Common myeloid progenitor, CD34-positive (primary cell): ENCODE measurements at regions of chr4 and their contacts with region 1.

Region 1: DNA sequence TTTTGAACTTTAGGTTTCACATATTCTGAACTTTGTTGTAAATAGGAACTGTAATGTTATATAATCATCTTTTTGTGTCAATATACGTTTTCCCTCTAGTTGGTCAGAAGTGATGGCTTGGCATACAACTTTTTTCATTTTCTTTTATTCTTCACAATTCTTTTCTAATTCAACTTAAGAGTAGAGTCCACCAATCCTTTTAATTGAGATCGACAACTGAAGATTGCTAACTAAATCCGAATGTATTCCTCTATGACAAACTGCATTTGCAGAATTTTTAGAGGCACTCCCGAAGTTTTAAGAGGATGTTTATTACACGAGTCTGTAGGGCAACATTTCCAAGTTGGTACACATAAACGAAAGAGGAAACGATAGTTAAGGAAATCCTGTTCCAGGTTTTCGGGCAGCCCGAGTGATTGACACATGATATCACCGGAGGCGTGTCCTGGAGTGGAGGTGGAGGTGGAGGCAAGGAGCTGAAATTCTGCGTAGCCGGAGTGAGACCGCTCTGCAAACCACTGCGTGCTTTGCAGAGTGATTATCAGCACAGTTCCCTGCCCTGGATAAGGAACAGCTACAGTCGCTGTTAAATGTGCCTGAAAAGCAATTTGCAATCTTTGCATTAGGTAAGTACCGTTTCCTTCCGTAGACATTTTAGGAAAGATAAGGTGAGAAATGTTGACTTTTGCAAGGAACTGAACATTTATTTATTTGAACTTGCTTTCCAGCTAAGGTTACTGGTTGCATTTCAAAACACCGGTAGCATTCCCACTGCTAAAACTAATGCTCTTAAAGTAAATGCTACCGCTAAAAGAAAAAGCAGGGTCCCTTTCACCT is at the start of gene SPRY1:
- DNase-seq: peak; percentile 88 to 96 (median 95)
- H3K4me3 ChIP-seq: peak within 1 kb of the TSS; percentile 64 to 99 (median 83)
- H3K27ac ChIP-seq: peak within 1 kb of the TSS; percentile 25 to 73
- H3K4me1 ChIP-seq: peaks cover 15 to 39% (median 21%) of the 10 kb centered on the region in 4 experiments
- H3K27me3 ChIP-seq: no peaks in the 10 kb centered on the region

Region 2: DNA sequence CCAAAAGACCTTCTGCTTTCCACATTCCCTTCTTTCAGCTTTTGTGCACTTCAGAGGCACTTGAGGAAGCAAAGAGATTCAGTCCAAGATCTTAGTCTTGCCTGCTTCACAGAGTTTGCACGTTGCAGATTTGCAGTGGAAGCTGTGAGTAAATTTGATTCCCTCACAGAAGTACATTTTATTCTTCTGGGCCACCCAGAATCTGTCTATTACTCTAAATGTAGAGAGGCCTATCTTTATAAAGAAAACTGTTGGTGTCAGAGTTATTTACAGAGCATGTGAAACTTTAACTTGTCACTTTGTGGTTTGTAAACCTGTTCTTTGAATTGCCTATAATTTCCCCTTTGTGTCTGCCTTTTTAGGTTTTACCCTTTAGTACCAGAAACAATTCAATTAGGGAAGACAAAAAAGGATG is 15.6 kb after region 1 on chr4:
- CTCF ChIA-PET with region 1: interaction called, 30 read pairs
- POLR2A ChIA-PET with region 1: interaction called, 7 read pairs
- DNase-seq: peak in 2 of 3 donors; percentile 40 to 64
- H3K4me3 ChIP-seq: peak overlapping the region in 1 of 7 experiments; percentile 41
- H3K27ac ChIP-seq: no peak overlapping the region
- H3K4me1 ChIP-seq: peaks cover 33 to 60% (median 46%) of the 10 kb centered on the region in 4 experiments
- H3K27me3 ChIP-seq: no peaks in the 10 kb centered on the region

Region 3: DNA sequence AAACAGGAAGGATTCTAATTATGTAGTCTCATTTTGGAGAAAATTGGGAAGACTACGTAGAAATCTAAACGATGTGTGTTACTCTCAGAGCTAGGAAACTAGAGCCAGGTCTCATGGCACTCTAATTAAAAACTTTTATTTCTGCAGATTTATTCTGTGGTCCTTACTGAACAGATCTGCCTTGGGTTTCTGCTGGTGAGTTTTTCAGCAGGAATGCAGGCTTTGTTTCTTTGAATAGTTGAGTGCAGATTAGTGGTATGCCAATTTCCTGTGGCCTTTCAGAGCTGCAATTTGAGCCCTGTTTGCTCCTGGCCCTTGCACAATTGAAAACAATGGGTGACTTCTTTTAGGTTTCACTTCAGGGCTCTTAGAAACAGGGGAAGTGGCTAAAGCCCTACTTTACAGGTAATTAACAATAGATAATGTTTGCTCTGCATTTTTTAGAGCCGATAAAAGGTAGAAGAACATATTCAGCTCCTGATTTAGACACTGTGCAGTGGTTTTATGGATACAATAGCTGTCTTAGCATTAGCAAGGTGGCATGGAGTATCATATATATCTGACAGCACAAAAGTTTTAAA is 21.9 kb after region 1 on chr4:
- CTCF ChIA-PET with region 1: interaction called, 30 read pairs
- POLR2A ChIA-PET with region 1: interaction called, 6 read pairs
- DNase-seq: peak in 2 of 3 donors; percentile 58 to 67
- H3K4me3 ChIP-seq: peak overlapping the region in 3 of 7 experiments; percentile 14 to 53 (median 32)
- H3K27ac ChIP-seq: peak overlapping the region; percentile 30 to 63
- H3K4me1 ChIP-seq: peaks cover 47 to 89% (median 74%) of the 10 kb centered on the region in 4 experiments
- H3K27me3 ChIP-seq: no peaks in the 10 kb centered on the region

Region 4: DNA sequence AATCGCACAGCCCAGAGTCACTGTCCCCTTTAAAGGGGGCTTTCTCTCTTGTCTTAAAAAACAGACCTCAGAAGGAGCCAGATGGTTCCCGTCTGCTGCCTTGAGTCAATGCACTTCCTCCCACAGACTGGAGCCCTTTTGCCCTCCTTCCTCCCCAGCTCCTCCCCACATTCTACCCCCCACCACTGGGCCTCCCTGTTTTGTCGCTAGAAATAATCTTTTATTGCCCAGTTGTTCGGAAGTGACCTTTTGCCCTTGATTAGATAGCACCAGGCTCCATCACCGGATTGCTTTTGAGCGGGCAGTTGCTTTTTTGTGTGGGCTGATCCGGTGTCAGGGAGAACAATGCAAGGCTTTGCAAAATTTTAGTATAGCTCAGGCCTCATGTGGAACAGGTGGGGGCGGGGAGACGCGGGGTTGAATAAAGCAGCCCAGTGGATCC is 47.8 kb after region 1 on chr4:
- CTCF ChIA-PET with region 1: interaction called, 9 read pairs
- POLR2A ChIA-PET with region 1: interaction called, 14 read pairs
- DNase-seq: peak; percentile 87 to 99 (median 98)
- H3K4me3 ChIP-seq: peak overlapping the region in 5 of 7 experiments; percentile 23 to 67 (median 46)
- H3K27ac ChIP-seq: peak overlapping the region; percentile 68 to 75
- H3K4me1 ChIP-seq: peaks cover 12 to 36% (median 26%) of the 10 kb centered on the region in 4 experiments
- H3K27me3 ChIP-seq: no peaks in the 10 kb centered on the region

Region 5: GRCh38 chr4:123477711-123478209 is 81.2 kb after region 1 on chr4:
- CTCF ChIA-PET with region 1: interaction called, 5 read pairs
- POLR2A ChIA-PET with region 1: interaction called, 13 read pairs
- DNase-seq: peak; percentile 91 to 97 (median 96)
- H3K4me3 ChIP-seq: peak overlapping the region in 1 of 7 experiments; percentile 21
- H3K27ac ChIP-seq: no peak overlapping the region
- H3K4me1 ChIP-seq: peaks cover 6 to 31% (median 24%) of the 10 kb centered on the region in 4 experiments
- H3K27me3 ChIP-seq: no peaks in the 10 kb centered on the region

Region 6: DNA sequence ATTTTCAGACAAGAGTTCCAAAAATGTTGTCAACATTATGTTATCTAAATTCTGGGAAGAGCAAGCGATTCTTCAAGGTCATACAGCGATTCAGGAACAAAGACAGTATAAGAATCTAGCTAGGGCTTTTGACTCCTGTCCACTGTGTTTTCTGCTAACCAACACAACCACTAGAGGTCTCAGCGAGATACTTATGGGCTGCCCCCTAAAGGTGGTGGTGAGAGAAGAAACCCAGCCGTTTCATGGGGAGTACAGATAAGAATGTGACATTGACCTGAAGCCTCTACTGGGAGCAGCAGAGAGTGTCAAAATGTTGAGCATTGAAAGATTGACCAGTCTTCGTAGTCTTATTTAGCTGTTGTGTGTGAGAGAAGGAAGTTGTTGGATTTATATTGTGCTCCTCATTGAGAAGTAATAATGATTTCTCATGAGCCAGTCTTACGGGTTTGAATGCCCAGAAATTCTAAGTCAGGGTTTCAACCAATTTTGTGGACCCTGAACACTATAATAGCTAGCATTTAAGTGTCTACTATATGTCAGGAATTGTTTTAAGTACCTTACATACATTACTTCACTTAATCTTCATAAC is 168.3 kb after region 1 on chr4:
- CTCF ChIA-PET with region 1: interaction called, 12 read pairs
- POLR2A ChIA-PET with region 1: interaction called, 3 read pairs
- DNase-seq: peak; percentile 89 to 93 (median 93)
- H3K4me3 ChIP-seq: no peak overlapping the region
- H3K27ac ChIP-seq: no peak overlapping the region
- H3K4me1 ChIP-seq: peaks cover 0 to 6% (median 3%) of the 10 kb centered on the region in 4 experiments
- H3K27me3 ChIP-seq: no peaks in the 10 kb centered on the region